ENCODE measurements at regions of chr3 and their contacts with region 1.

Region 1: DNA sequence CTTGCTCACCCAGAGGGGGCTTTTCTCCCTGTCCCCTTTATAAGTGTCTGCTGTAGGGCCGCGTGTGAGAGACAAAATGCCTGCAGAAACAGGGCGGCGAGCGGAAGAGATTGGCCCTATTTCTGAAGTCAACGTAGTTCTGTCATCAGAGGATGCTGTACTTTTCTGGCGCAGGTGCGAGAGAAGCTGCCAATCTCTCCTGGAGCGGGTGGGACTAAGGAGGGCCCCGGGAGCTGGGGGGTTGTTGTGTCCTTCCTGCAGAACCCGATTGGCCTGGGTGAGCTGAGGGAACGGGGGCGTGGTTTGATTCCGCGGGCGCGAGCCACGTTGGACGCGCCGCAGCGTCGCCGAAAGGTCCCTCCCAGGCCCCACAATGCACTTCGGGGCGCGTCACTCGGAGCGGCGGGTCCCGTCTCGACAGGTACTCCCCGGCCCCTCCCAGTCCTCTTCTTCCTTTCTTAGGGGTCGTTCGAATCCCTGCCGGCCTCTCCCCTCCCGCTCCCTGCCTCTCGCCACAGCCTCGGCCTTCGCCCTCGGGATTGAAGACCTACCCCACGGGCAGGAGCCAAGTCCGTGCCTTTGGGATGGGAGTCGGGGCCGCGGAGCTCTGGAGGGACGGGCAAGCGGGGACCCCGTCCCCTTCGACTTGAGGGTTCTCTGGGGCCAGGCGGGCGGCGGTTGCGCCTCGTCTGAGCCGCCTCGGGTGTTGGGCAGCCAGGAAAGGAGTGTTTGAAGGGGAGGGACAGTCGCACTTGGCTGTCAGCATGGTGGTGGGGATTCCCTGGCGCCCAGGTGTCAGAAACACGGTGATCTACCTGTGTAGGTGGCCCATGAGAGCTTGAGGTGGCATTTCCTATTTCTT is at the start of gene SEC22A:
- DNase-seq: peak; percentile 95
- H3K4me3 Mint-ChIP-seq: peak within 1 kb of the TSS; percentile 87
- H3K27ac Mint-ChIP-seq: peak within 1 kb of the TSS; percentile 96
- H3K4me1 Mint-ChIP-seq: peaks cover 29% of the 10 kb centered on the region
- H3K27me3 Mint-ChIP-seq: peaks cover under 1% of the 10 kb centered on the region
- total RNA-seq, gene SEC22A: 15.8 and 18.5 TPM in 2 replicates

Region 2: GRCh38 chr3:121660356-121661171 is 1541.2 kb before region 1 on chr3 and contains the start of gene HCLS1:
- intact Hi-C with region 1: loop called (anchors 5 kb)
- DNase-seq: peak; percentile 73
- H3K4me3 Mint-ChIP-seq: peak within 1 kb of the TSS; percentile 95
- H3K27ac Mint-ChIP-seq: peak within 1 kb of the TSS; percentile 99
- H3K4me1 Mint-ChIP-seq: peaks cover 57% of the 10 kb centered on the region
- H3K27me3 Mint-ChIP-seq: no peaks in the 10 kb centered on the region
- total RNA-seq, gene HCLS1: 234 and 235 TPM in 2 replicates

Region 3: GRCh38 chr3:122564155-122564912 is 637.5 kb before region 1 on chr3 and contains the starts of genes DTX3L and PARP9:
- intact Hi-C with region 1: loop called (anchors 5 kb)
- DNase-seq: peak; percentile 87
- H3K4me3 Mint-ChIP-seq: peak within 1 kb of the TSS; percentile 99
- H3K27ac Mint-ChIP-seq: peak within 1 kb of the TSS; percentile 98
- H3K4me1 Mint-ChIP-seq: peaks cover 79% of the 10 kb centered on the region
- H3K27me3 Mint-ChIP-seq: no peaks in the 10 kb centered on the region
- total RNA-seq, gene DTX3L: 40.8 and 44.5 TPM in 2 replicates
- total RNA-seq, gene PARP9: 45.0 and 47.3 TPM in 2 replicates

Region 4: DNA sequence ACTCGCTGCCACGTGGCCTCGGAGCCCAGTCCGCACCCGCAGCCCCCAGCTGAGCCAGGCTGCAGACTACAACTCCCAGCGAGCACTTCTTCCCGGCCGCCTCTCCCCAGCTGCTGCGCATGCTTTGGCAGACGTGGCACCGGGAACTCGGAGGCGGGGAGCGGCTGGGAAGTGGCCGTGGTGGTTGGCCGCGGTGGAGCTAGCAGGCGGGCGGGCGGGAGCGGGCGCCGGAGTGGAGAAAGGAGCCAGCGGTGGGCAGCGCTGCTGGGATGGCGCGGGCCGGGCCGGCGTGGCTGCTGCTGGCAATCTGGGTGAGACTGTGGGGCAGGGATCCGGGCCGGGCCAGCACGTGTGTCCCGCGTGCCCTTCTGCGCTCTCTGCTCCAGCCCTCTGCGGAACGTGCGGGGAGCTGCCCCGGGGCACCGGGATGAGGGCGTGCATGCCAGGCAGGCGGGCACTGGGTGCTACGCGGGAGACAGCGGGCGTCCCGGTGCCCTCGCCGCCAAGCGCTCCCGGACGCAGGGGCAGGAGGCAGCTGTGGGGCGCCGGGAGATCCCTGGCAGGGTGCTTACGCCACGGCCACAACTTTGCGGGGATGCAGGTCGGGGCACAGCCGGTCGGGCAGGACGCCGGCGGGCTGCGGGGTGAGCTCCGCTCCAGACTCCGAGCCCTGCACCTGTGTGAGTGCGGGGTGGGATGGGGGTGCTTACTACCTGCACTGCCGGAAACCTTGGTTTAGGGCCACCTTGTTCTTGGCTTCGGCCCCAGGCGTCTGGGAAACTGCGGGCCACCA is 134.7 kb before region 1 on chr3 and contains the start of gene PDIA5:
- intact Hi-C with region 1: loop called (anchors 1 kb)
- DNase-seq: peak; percentile 61
- H3K4me3 Mint-ChIP-seq: peak within 1 kb of the TSS; percentile 91
- H3K27ac Mint-ChIP-seq: peak within 1 kb of the TSS; percentile 52
- H3K4me1 Mint-ChIP-seq: peaks cover 60% of the 10 kb centered on the region
- H3K27me3 Mint-ChIP-seq: no peaks in the 10 kb centered on the region
- total RNA-seq, gene PDIA5: 28.9 and 31.1 TPM in 2 replicates

Region 5: GRCh38 chr3:123584988-123585937 is 383.5 kb after region 1 on chr3 and contains the start of gene HACD2:
- intact Hi-C with region 1: loop called (anchors 1 kb)
- DNase-seq: peak; percentile 93
- H3K4me3 Mint-ChIP-seq: no peak within 1 kb of the TSS
- H3K27ac Mint-ChIP-seq: peak within 1 kb of the TSS; percentile 63
- H3K4me1 Mint-ChIP-seq: peaks cover 23% of the 10 kb centered on the region
- H3K27me3 Mint-ChIP-seq: no peaks in the 10 kb centered on the region
- total RNA-seq, gene HACD2: 31.5 TPM in 2 replicates

Region 6: GRCh38 chr3:123960781-123961507 is 759.1 kb after region 1 on chr3 and contains the start of gene CCDC14:
- intact Hi-C with region 1: loop called (anchors 10 kb)
- DNase-seq: peak; percentile 68
- H3K4me3 Mint-ChIP-seq: peak within 1 kb of the TSS; percentile 95
- H3K27ac Mint-ChIP-seq: peak within 1 kb of the TSS; percentile 88
- H3K4me1 Mint-ChIP-seq: peaks cover 30% of the 10 kb centered on the region
- H3K27me3 Mint-ChIP-seq: peaks cover 17% of the 10 kb centered on the region
- total RNA-seq, gene CCDC14: 37.3 and 43.7 TPM in 2 replicates

Measured in activated T-helper 1 cell treated with anti-CD3 and anti-CD28 coated beads, Interleukin-12 subunit alpha, Interleukin-12 subunit beta, Interleukin-2, Interleukin-4 antibody, amounts not matched to agents 30 ng/mL and 10 ng/mL and 1 ng/mL, durations not matched to agents 14 hours and 24 hours and 36 hours (primary cell).